CD4-positive, alpha-beta memory T cell (primary cell): ENCODE measurements at regions of chr6 and their contacts with region 1.

Region 1: DNA sequence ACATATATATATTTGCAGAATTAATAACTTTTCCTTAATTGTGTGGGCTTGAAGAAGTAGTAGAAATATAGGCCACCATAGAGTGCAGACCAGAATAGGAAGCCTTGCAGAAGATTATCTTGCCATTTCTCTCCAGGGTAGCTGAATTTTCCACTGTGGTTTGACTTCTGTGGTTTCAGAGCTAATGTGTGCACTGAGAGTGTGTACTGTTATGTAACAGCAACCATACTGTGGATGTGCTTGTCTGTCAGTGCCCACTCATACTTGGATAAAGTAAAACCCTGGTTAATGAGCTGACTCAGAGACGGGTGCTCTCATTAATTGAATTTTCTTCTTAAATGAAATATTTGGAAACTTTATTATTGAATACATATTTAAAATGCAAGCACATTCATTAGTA is 57.2 kb downstream of the CEP43 start:
- DNase-seq: peak; percentile 64 to 84 (median 75)
- H3K4me3 ChIP-seq: no peak overlapping the region
- H3K4me3 Mint-ChIP-seq: peak overlapping the region; percentile 12 to 76 (median 67)
- H3K27ac ChIP-seq: no peak overlapping the region
- H3K27ac Mint-ChIP-seq: peak overlapping the region; percentile 6 to 87 (median 76)
- H3K4me1 ChIP-seq: peaks cover 56% of the 10 kb centered on the region
- H3K4me1 Mint-ChIP-seq: peaks cover 37 to 57% (median 42%) of the 10 kb centered on the region in 4 donors
- H3K27me3 ChIP-seq: no peaks in the 10 kb centered on the region
- H3K27me3 Mint-ChIP-seq: no peaks in the 10 kb centered on the region

Region 2: DNA sequence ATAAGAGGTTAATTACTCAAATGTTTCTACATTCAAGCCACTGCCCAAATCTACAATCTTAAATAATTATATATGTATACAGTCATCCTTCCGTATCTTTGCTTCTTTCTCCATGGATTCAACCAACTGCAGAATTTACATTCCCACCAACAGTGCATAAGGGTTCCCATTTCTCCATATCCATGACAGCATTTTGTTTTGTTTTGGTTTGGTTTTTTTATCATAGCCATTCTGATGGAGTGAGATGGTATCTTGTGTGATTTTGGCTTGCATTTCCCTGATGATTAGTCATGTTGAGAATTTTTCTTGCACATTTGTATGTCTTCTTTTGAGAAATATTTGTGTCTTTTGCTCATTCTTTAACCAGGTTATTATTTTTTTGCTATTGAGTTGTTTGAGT is 1945.5 kb before region 1 on chr6:
- CTCF ChIA-PET with region 1: no interaction called
- POLR2A ChIA-PET with region 1: no interaction called
- intact Hi-C with region 1: no loop called
- DNase-seq: no peak
- H3K4me3 ChIP-seq: no peak overlapping the region
- H3K4me3 Mint-ChIP-seq: no peak overlapping the region
- H3K27ac ChIP-seq: no peak overlapping the region
- H3K27ac Mint-ChIP-seq: no peak overlapping the region
- H3K4me1 ChIP-seq: no peaks in the 10 kb centered on the region
- H3K4me1 Mint-ChIP-seq: no peaks in the 10 kb centered on the region
- H3K27me3 ChIP-seq: no peaks in the 10 kb centered on the region
- H3K27me3 Mint-ChIP-seq: no peaks in the 10 kb centered on the region

Region 3: GRCh38 chr6:167079853-167080297 is 23.5 kb after region 1 on chr6:
- CTCF ChIA-PET with region 1: interaction called, 3 read pairs
- POLR2A ChIA-PET with region 1: no interaction called
- intact Hi-C with region 1: loop called (anchors 2 kb)
- DNase-seq: peak; percentile 65 to 80 (median 73)
- H3K4me3 ChIP-seq: peak overlapping the region in 1 of 2 donors; percentile 21
- H3K4me3 Mint-ChIP-seq: peak overlapping the region; percentile 1 to 74 (median 62)
- H3K27ac ChIP-seq: peak overlapping the region; percentile 26
- H3K27ac Mint-ChIP-seq: peak overlapping the region in 6 of 7 donors; percentile 77 to 92 (median 84)
- H3K4me1 ChIP-seq: peaks cover 17% of the 10 kb centered on the region
- H3K4me1 Mint-ChIP-seq: peaks cover 16 to 22% (median 20%) of the 10 kb centered on the region in 4 donors
- H3K27me3 ChIP-seq: no peaks in the 10 kb centered on the region
- H3K27me3 Mint-ChIP-seq: no peaks in the 10 kb centered on the region